HEK293 (cell line): ENCODE measurements at regions of chr5 and their contacts with region 1.

Region 1: DNA sequence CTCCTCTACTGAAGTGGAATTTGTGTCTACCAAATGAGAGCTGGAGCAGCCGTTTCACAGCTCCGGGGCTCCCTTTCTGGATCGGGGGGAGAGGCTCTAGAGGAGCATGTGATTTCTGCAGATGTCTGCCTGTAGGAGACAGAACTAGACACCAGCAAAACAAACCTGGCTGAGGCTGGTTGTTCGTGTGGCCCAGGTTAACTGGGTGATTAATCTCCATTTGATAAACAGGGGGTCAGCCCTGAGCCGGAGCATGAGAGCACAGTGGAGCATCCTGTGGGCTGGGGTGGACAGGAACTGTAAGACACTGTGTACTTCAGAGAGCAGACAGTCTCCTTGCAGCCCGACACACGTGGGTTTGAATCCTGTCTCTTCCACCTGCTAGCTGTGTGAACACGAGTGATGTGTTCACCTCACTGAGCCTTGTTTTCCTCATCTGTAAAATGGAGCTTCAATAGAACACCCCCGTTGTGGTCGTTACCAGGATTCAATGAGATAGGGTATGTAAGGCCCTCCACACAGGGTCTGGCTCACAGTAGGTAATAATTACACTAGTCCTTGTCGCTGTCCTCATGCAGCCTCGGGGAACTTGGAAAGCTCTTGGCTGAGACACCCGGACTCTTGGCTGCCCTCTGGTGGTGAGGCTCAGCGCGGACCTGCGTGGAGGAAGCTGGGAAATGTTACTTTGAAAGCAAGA is 12.9 kb downstream of the CXCL14 start:
- H3K4me3 ChIP-seq: no peak overlapping the region
- H3K27ac ChIP-seq: no peak overlapping the region
- H3K4me1 ChIP-seq: no peaks in the 10 kb centered on the region
- CTCF ChIP-seq: peak; percentile 58; the same call in 1 of the 2 replicates

Region 2: DNA sequence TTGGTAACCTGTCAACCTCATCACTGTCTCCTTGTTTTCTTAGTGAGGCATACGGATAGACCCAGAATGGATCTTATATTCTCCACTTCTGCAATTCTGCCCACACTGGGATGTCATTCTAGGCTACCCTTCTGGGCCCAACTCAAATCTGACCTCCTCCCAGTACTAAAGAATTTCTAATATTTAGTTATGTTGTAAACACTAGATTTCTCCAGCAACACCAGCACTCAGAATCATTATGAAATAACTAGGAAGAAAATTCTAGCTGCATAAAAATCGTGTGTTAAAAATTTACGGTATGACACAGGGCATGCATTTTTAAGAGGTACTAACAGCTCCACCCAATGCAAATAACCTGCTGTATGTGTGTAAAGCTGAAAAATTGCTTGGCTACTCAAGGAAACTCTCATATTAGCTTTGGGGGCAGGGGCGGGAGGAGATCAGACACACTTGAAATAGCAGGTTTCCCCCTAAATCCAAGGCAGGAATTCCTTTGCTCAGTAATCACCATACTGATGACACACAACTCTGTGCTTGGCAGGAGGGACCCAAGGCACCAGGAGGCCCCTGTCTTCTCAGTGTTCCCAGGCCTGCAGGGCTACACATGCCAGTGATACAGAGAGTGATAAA is 194.1 kb before region 1 on chr5:
- CTCF ChIA-PET with region 1: no interaction called
- POLR2A ChIA-PET with region 1: no interaction called
- H3K4me3 ChIP-seq: no peak overlapping the region
- H3K27ac ChIP-seq: no peak overlapping the region
- H3K4me1 ChIP-seq: no peaks in the 10 kb centered on the region
- CTCF ChIP-seq: no peak

Region 3: DNA sequence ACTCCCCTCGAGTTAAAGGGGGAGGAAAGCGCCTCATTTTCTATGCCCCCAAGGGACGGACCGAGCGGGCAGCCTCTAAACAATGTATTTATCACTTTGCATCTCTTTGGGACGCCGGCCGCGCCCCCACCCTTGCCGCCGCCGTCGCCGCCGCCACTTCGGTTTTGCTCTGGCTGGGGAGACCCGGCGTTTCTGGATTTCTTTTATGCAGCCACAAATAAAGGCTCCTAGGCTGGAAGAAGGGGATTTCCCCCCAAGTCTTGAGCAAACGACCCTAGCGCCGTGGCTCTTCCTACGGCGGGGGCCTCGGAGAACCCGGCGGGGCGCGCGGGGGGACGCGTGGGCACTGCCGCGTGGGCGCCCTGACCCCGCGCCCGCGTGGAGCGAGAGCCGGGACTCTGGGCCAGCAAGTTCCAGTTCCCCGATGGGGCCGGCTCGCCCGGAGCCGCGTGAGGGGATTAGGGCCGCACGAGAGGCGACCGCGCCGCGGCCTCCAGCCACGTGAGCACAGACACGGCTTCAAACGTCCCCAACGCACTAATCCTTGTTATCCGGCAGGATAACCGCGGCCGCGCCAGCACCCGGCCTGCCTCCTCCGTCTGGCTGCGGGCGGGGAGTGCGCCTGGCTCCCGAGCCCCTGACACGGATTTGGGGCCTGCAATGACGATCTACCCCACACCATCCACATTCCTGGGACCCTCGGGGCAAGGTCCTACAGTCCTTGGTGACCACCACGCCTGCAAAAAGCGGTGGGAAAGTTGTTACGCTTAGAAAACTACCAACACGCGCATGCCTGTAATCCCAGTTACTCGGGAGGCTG is 22.2 kb before region 1 on chr5:
- CTCF ChIA-PET with region 1: interaction called, 287 read pairs
- POLR2A ChIA-PET with region 1: no interaction called
- H3K4me3 ChIP-seq: no peak overlapping the region
- H3K27ac ChIP-seq: no peak overlapping the region
- H3K4me1 ChIP-seq: no peaks in the 10 kb centered on the region
- CTCF ChIP-seq: no peak

Region 4: DNA sequence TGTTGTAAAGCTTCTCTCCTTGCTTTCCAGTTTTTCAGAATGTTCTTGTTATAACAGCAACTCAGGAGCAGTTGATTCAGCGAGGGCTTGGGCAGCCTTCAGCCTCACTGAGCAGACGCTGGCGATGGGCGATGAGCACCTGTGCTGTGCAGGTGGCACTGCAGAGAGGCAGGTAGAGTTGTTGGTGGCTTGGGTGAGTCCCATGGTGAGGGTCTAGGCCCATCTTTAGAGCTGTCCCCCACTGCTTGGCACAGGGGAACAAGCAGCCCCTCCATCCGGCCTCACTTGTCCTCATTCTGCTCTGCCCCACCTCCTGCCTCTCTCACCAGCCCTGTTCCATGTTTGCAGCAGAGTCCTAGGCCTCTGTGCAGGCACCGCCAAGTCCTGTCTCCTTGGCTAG is 19.0 kb after region 1 on chr5:
- CTCF ChIA-PET with region 1: interaction called, 46 read pairs
- POLR2A ChIA-PET with region 1: no interaction called
- H3K4me3 ChIP-seq: no peak overlapping the region
- H3K27ac ChIP-seq: no peak overlapping the region
- H3K4me1 ChIP-seq: no peaks in the 10 kb centered on the region
- CTCF ChIP-seq: no peak

Region 5: GRCh38 chr5:135729321-135729786 is 163.5 kb after region 1 on chr5:
- CTCF ChIA-PET with region 1: interaction called, 42 read pairs
- POLR2A ChIA-PET with region 1: no interaction called
- H3K4me3 ChIP-seq: no peak overlapping the region
- H3K27ac ChIP-seq: no peak overlapping the region
- H3K4me1 ChIP-seq: no peaks in the 10 kb centered on the region
- CTCF ChIP-seq: no peak